PC-9 (cell line): ENCODE measurements at regions of chr3 and their contacts with region 1.

Region 1: DNA sequence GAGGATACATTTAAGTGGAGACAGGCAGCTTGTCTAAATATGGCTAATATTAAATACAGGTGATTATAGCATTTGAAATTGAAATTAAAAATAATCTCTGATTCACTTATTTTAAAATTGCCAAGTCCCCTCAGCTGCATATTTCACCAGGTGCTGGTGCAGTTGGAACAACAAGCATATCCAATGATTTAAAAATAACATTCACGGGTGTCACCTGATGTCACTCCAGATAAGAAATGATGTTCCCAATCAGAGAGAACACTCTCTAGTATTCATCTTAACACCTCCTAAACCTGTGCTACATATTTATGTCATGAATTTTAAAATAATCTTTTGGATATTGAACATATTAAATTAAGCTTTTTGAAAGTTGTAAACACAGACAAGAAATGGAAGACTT is 249.9 kb downstream of the CADM2 start:
- DNase-seq: no peak
- H3K4me3 ChIP-seq: no peak overlapping the region
- H3K27ac ChIP-seq: no peak overlapping the region
- H3K4me1 ChIP-seq: no peaks in the 10 kb centered on the region
- H3K27me3 ChIP-seq: no peaks in the 10 kb centered on the region
- CTCF ChIP-seq: no peak

Region 2: DNA sequence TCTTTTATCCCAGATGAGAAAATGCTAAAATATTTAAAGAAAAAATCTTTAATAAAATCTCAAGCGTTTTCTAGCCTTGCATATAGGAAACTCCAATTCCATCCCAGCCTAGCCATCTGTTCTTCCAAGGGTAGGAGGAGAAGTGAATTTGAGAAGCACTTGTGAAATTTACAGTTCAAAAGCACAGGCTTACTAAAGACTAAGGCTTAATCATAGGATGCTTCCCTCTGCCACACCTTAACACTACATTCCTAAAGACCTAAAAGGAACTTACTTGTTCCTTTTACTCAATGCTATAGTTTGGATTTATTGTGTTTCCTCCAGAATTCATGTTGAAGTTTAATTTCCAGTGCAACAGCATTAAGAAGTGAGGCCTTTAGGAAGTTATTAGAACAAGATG is 1014.6 kb before region 1 on chr3:
- CTCF ChIA-PET with region 1: no interaction called
- POLR2A ChIA-PET with region 1: no interaction called
- intact Hi-C with region 1: no loop called
- DNase-seq: no peak
- H3K4me3 ChIP-seq: no peak overlapping the region
- H3K27ac ChIP-seq: no peak overlapping the region
- H3K4me1 ChIP-seq: no peaks in the 10 kb centered on the region
- H3K27me3 ChIP-seq: no peaks in the 10 kb centered on the region
- CTCF ChIP-seq: no peak

Region 3: DNA sequence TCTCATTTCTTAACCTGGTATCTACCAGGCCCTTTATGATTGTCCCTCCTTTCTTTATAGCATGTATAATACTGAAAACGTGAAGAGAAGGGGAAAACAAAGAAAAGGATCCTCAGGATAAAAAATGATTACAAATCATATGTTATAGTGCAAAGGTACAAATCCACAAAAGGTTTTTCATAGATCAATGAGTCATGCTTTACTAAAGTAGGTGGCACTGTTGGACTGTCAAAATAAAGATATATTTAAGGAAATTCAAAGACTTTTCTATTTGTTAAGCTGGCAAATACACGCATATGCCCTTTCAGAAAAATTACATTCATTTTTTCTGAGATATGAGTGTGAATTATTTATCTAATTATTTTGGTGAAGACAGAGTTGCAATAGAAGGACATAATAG is 98.3 kb before region 1 on chr3:
- CTCF ChIA-PET with region 1: no interaction called
- POLR2A ChIA-PET with region 1: no interaction called
- intact Hi-C with region 1: no loop called
- DNase-seq: no peak
- H3K4me3 ChIP-seq: no peak overlapping the region
- H3K27ac ChIP-seq: no peak overlapping the region
- H3K4me1 ChIP-seq: no peaks in the 10 kb centered on the region
- H3K27me3 ChIP-seq: no peaks in the 10 kb centered on the region
- CTCF ChIP-seq: peak; percentile 26; the same call in 1 of the 2 replicates

Region 4: GRCh38 chr3:85760342-85760741 is 551.7 kb after region 1 on chr3:
- CTCF ChIA-PET with region 1: no interaction called
- POLR2A ChIA-PET with region 1: interaction called, 13 read pairs
- intact Hi-C with region 1: no loop called
- DNase-seq: no peak
- H3K4me3 ChIP-seq: no peak overlapping the region
- H3K27ac ChIP-seq: no peak overlapping the region
- H3K4me1 ChIP-seq: no peaks in the 10 kb centered on the region
- H3K27me3 ChIP-seq: no peaks in the 10 kb centered on the region
- CTCF ChIP-seq: no peak

Region 5: DNA sequence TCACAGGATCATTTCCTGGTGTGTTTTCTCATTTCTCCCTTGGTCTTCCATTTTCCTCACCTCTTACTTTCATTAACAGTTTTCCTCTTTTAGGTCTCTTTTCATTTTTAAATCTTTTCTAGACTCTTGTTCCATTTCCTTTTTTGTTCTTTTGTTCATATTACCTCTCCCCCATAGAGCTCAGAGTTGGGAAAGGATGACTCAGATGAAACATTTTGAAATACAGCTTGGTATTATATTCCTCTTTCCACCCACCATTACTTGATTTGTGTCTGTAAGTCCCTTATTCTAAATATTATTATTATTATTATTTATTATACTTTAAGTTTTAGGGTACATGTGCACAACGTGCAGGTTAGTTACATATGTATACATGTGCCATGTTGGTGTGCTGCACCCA is 1629.2 kb after region 1 on chr3:
- CTCF ChIA-PET with region 1: no interaction called
- POLR2A ChIA-PET with region 1: no interaction called
- intact Hi-C with region 1: no loop called
- DNase-seq: no peak
- H3K4me3 ChIP-seq: no peak overlapping the region
- H3K27ac ChIP-seq: no peak overlapping the region
- H3K4me1 ChIP-seq: no peaks in the 10 kb centered on the region
- H3K27me3 ChIP-seq: no peaks in the 10 kb centered on the region
- CTCF ChIP-seq: no peak

Region 6: GRCh38 chr3:87082796-87083440 is 1874.3 kb after region 1 on chr3:
- CTCF ChIA-PET with region 1: no interaction called
- POLR2A ChIA-PET with region 1: no interaction called
- intact Hi-C with region 1: no loop called
- DNase-seq: peak; percentile 17 to 57
- H3K4me3 ChIP-seq: no peak overlapping the region
- H3K27ac ChIP-seq: no peak overlapping the region
- H3K4me1 ChIP-seq: no peaks in the 10 kb centered on the region
- H3K27me3 ChIP-seq: no peaks in the 10 kb centered on the region
- CTCF ChIP-seq: peak; percentile 77